ENCODE measurements at regions of chr5 and their contacts with region 1.

Region 1: GRCh38 chr5:12825163-12825562 is 920.9 kb upstream of the CTNND2 start:
- DNase-seq: no peak
- ATAC-seq: no peak
- H3K4me3 ChIP-seq: no peak overlapping the region
- H3K27ac ChIP-seq: no peak overlapping the region
- H3K4me1 ChIP-seq: no peaks in the 10 kb centered on the region
- H3K27me3 ChIP-seq: no peaks in the 10 kb centered on the region
- CTCF ChIP-seq: no peak
- EP300 ChIP-seq: no peak
- POLR2A ChIP-seq: no peak
- RAD21 ChIP-seq: no peak

Region 2: DNA sequence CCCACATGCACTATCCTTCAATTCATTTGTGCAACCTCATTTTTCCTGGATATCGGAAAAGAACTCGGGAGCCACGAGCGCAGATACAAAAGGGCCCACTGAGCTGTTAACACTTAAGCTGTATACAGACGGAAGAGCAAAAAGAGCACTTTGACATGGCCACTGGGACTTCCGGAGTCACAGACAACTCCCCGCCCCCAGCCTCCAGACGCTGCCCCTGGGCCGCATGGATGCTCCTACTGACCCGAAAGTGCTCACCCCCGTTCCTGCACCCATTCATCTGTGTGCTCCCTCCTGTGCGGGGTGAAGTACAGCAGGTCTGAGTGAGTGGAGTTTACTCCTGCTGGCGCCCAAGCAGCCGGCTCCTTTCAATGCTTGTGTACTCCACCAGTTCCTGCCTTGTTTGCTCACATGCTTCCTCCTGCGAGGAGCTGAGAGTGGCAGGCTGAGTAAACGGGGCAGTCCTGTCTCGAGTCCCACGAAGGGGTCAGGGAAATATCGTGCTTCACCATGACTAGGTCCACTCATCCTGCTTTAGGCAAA is 19.9 kb before region 1 on chr5:
- CTCF ChIA-PET with region 1: no interaction called
- POLR2A ChIA-PET with region 1: no interaction called
- in situ Hi-C with region 1: no loop called
- intact Hi-C with region 1: loop called (anchors 1 kb)
- DNase-seq: no peak
- ATAC-seq: no peak
- H3K4me3 ChIP-seq: no peak overlapping the region
- H3K27ac ChIP-seq: no peak overlapping the region
- H3K4me1 ChIP-seq: no peaks in the 10 kb centered on the region
- H3K27me3 ChIP-seq: no peaks in the 10 kb centered on the region
- CTCF ChIP-seq: no peak
- EP300 ChIP-seq: no peak
- POLR2A ChIP-seq: no peak
- RAD21 ChIP-seq: no peak

Measured in HepG2 (cell line).